CD4-positive, alpha-beta T cell (primary cell): ENCODE measurements at regions of chr2 and their contacts with region 1.

Region 1: GRCh38 chr2:75710577-75711253 is at the start of gene GCFC2:
- DNase-seq: peak; percentile 65 to 91 (median 77)
- ATAC-seq: peak; percentile 84
- H3K4me3 ChIP-seq: peak within 1 kb of the TSS; percentile 79
- H3K4me3 Mint-ChIP-seq: peak within 1 kb of the TSS; percentile 97
- H3K27ac ChIP-seq: peak within 1 kb of the TSS; percentile 66 to 77
- H3K27ac Mint-ChIP-seq: peak within 1 kb of the TSS; percentile 98
- H3K4me1 ChIP-seq: peaks cover 8% of the 10 kb centered on the region
- H3K4me1 Mint-ChIP-seq: peaks cover 41% of the 10 kb centered on the region
- H3K27me3 ChIP-seq: no peaks in the 10 kb centered on the region
- H3K27me3 Mint-ChIP-seq: no peaks in the 10 kb centered on the region
- CTCF ChIP-seq: peak; percentile 54
- total RNA-seq, gene GCFC2: 15.7 to 17.1 TPM

Region 2: GRCh38 chr2:75646583-75647425 is 63.9 kb before region 1 on chr2 and contains the start of gene MRPL19:
- CTCF ChIA-PET with region 1: interaction called, 8 read pairs
- POLR2A ChIA-PET with region 1: interaction called, 26 read pairs
- intact Hi-C with region 1: loop called (anchors 2 kb)
- DNase-seq: peak; percentile 52 to 89 (median 68)
- ATAC-seq: peak; percentile 96
- H3K4me3 ChIP-seq: peak within 1 kb of the TSS; percentile 98
- H3K4me3 Mint-ChIP-seq: peak within 1 kb of the TSS; percentile 96
- H3K27ac ChIP-seq: peak within 1 kb of the TSS; percentile 46 to 50
- H3K27ac Mint-ChIP-seq: peak within 1 kb of the TSS; percentile 92
- H3K4me1 ChIP-seq: peaks cover 16% of the 10 kb centered on the region
- H3K4me1 Mint-ChIP-seq: peaks cover 49% of the 10 kb centered on the region
- H3K27me3 ChIP-seq: no peaks in the 10 kb centered on the region
- H3K27me3 Mint-ChIP-seq: no peaks in the 10 kb centered on the region
- CTCF ChIP-seq: no peak
- total RNA-seq, gene MRPL19: 10.7 to 14.9 TPM